ENCODE measurements at regions of chr6 and their contacts with region 1.

Region 1: DNA sequence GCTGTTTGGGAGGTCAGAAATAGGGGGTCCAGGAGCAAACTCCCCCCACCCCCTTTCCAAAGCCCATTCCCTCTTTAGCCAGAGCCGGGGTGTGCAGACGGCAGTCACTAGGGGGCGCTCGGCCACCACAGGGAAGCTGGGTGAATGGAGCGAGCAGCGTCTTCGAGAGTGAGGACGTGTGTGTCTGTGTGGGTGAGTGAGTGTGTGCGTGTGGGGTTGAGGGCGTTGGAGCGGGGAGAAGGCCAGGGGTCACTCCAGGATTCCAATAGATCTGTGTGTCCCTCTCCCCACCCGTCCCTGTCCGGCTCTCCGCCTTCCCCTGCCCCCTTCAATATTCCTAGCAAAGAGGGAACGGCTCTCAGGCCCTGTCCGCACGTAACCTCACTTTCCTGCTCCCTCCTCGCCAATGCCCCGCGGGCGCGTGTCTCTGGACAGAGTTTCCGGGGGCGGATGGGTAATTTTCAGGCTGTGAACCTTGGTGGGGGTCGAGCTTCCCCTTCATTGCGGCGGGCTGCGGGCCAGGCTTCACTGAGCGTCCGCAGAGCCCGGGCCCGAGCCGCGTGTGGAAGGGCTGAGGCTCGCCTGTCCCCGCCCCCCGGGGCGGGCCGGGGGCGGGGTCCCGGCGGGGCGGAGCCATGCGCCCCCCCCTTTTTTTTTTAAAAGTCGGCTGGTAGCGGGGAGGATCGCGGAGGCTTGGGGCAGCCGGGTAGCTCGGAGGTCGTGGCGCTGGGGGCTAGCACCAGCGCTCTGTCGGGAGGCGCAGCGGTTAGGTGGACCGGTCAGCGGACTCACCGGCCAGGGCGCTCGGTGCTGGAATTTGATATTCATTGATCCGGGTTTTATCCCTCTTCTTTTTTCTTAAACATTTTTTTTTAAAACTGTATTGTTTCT is at the start of gene VEGFA:
- DNase-seq: peak; percentile 72 to 92 (median 90)
- ATAC-seq: peak; percentile 80
- H3K4me3 ChIP-seq: peak within 1 kb of the TSS; percentile 64 to 88
- H3K4me3 Mint-ChIP-seq: peak within 1 kb of the TSS; percentile 92
- H3K27ac ChIP-seq: peak within 1 kb of the TSS in 1 of 2 experiments; percentile 27
- H3K27ac Mint-ChIP-seq: peak within 1 kb of the TSS; percentile 23
- H3K4me1 ChIP-seq: peaks cover 6% of the 10 kb centered on the region
- H3K4me1 Mint-ChIP-seq: peaks cover 13% of the 10 kb centered on the region
- H3K27me3 ChIP-seq: peaks cover 0 to 20% of the 10 kb centered on the region in 2 experiments
- H3K27me3 Mint-ChIP-seq: peaks cover 28% of the 10 kb centered on the region
- CTCF ChIP-seq: peak; percentile 96
- total RNA-seq, gene VEGFA: 4.6 to 5.3 TPM

Region 2: DNA sequence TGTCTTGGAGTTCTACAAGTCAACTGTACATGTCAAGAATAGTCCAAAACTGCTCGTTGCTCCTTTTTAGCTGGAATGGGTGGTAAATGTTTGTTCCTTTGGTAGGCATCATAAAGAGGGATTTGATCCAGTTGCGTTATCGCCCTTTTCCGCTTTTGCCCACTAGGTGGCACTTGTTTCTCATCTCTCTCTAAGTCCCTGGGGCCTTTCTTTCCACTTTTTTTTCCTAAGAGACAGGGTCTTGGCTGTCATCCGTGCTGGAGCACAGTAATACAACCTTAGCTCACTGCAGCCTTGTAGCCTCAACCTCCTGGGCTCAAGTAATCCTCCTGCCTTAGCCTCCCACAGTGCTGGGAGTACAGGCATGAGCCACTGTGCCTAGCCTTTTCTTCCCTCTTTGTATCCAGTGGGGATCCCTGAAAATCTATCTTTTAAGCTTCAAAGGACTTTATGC is 161.4 kb before region 1 on chr6:
- CTCF ChIA-PET with region 1: interaction called, 3 read pairs
- POLR2A ChIA-PET with region 1: no interaction called
- intact Hi-C with region 1: loop called in 1 of 2 experiments (anchors 5 kb)
- DNase-seq: peak; percentile 23 to 75 (median 61)
- ATAC-seq: peak; percentile 38
- H3K4me3 ChIP-seq: no peak overlapping the region
- H3K4me3 Mint-ChIP-seq: no peak overlapping the region
- H3K27ac ChIP-seq: no peak overlapping the region
- H3K27ac Mint-ChIP-seq: no peak overlapping the region
- H3K4me1 ChIP-seq: no peaks in the 10 kb centered on the region
- H3K4me1 Mint-ChIP-seq: peaks cover 3% of the 10 kb centered on the region
- H3K27me3 ChIP-seq: no peaks in the 10 kb centered on the region
- H3K27me3 Mint-ChIP-seq: no peaks in the 10 kb centered on the region
- CTCF ChIP-seq: peak; percentile 63

Region 3: DNA sequence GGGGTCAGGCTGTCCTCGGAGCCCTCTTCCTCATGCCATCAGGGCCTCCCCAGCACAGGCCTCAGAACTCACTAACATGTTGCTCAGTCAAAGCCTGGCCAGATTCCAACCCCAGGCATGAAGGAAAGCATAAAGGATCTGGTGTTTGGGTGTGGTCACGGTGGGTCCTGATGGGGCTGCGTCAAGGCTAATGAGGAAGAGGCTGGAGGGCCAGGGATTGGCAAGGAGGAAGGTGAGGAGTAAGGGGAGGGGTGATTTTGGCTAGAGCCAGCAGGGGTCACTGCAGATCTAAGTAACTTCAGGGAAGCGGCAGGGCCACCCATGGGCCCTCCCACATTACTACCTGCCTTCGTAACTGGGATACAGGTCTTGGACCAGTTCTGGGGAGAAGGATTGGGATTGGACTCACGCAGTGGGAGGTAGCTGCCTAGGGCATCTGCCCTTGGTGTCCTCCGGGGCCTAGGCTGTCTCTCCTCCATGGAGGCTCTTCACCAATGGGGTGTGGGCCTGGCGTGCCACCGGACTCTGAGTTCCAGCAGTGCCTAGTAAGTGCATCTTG is 46.0 kb before region 1 on chr6:
- CTCF ChIA-PET with region 1: interaction called, 15 read pairs
- POLR2A ChIA-PET with region 1: no interaction called
- intact Hi-C with region 1: loop called (anchors 1 kb)
- DNase-seq: peak; percentile 40 to 83 (median 69)
- ATAC-seq: peak; percentile 65
- H3K4me3 ChIP-seq: no peak overlapping the region
- H3K4me3 Mint-ChIP-seq: no peak overlapping the region
- H3K27ac ChIP-seq: no peak overlapping the region
- H3K27ac Mint-ChIP-seq: no peak overlapping the region
- H3K4me1 ChIP-seq: peaks cover 25% of the 10 kb centered on the region
- H3K4me1 Mint-ChIP-seq: peaks cover 35% of the 10 kb centered on the region
- H3K27me3 ChIP-seq: no peaks in the 10 kb centered on the region
- H3K27me3 Mint-ChIP-seq: no peaks in the 10 kb centered on the region
- CTCF ChIP-seq: peak; percentile 70

Region 4: GRCh38 chr6:43742931-43743632 is 26.7 kb before region 1 on chr6:
- CTCF ChIA-PET with region 1: interaction called, 10 read pairs
- POLR2A ChIA-PET with region 1: no interaction called
- intact Hi-C with region 1: no loop called
- DNase-seq: no peak
- ATAC-seq: no peak
- H3K4me3 ChIP-seq: no peak overlapping the region
- H3K4me3 Mint-ChIP-seq: no peak overlapping the region
- H3K27ac ChIP-seq: no peak overlapping the region
- H3K27ac Mint-ChIP-seq: no peak overlapping the region
- H3K4me1 ChIP-seq: no peaks in the 10 kb centered on the region
- H3K4me1 Mint-ChIP-seq: no peaks in the 10 kb centered on the region
- H3K27me3 ChIP-seq: no peaks in the 10 kb centered on the region
- H3K27me3 Mint-ChIP-seq: peaks cover 10% of the 10 kb centered on the region
- CTCF ChIP-seq: no peak

Region 5: GRCh38 chr6:43817192-43817591 is 47.4 kb after region 1 on chr6:
- CTCF ChIA-PET with region 1: interaction called, 10 read pairs
- POLR2A ChIA-PET with region 1: no interaction called
- intact Hi-C with region 1: loop called in 1 of 2 experiments (anchors 2 kb)
- DNase-seq: peak in 3 of 9 experiments; percentile 8 to 41 (median 26)
- ATAC-seq: peak; percentile 40
- H3K4me3 ChIP-seq: no peak overlapping the region
- H3K4me3 Mint-ChIP-seq: no peak overlapping the region
- H3K27ac ChIP-seq: no peak overlapping the region
- H3K27ac Mint-ChIP-seq: no peak overlapping the region
- H3K4me1 ChIP-seq: peaks cover 13% of the 10 kb centered on the region
- H3K4me1 Mint-ChIP-seq: peaks cover 6% of the 10 kb centered on the region
- H3K27me3 ChIP-seq: no peaks in the 10 kb centered on the region
- H3K27me3 Mint-ChIP-seq: peaks cover 11% of the 10 kb centered on the region
- CTCF ChIP-seq: no peak

Region 6: DNA sequence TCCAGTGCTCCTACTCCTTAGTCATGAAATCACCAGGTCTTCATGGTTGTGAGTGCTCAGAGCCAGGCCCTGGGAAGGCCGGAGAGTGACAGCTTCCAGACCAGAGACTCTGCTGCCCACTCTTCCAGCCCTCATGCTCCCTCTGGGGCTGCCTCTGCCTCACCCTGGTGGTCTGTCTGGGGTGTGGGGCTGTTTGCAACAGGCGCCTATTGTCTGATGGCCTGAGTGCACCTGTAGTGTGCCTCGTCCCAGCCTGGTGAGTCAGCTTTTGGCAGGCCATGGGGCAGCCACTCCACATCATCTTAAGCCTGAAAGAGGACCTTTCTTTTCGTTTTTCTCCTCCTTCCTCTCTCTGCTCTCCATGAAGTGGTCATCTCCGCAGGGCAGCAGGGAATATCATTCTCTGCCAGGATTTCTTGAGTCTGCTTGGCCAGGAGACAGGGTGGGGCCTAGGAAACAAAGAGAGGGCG is 174.0 kb after region 1 on chr6:
- CTCF ChIA-PET with region 1: no interaction called
- POLR2A ChIA-PET with region 1: no interaction called
- intact Hi-C with region 1: no loop called
- DNase-seq: no peak
- ATAC-seq: no peak
- H3K4me3 ChIP-seq: no peak overlapping the region
- H3K4me3 Mint-ChIP-seq: no peak overlapping the region
- H3K27ac ChIP-seq: no peak overlapping the region
- H3K27ac Mint-ChIP-seq: no peak overlapping the region
- H3K4me1 ChIP-seq: no peaks in the 10 kb centered on the region
- H3K4me1 Mint-ChIP-seq: no peaks in the 10 kb centered on the region
- H3K27me3 ChIP-seq: no peaks in the 10 kb centered on the region
- H3K27me3 Mint-ChIP-seq: no peaks in the 10 kb centered on the region
- CTCF ChIP-seq: no peak

Region 7: GRCh38 chr6:44074439-44075136 is 304.8 kb after region 1 on chr6:
- CTCF ChIA-PET with region 1: interaction called, 153 read pairs
- POLR2A ChIA-PET with region 1: interaction called, 3 read pairs
- intact Hi-C with region 1: loop called (anchors 1 kb)
- DNase-seq: peak; percentile 27 to 84 (median 67)
- ATAC-seq: peak; percentile 50
- H3K4me3 ChIP-seq: peak overlapping the region in 1 of 2 experiments; percentile 44
- H3K4me3 Mint-ChIP-seq: peak overlapping the region; percentile 98
- H3K27ac ChIP-seq: no peak overlapping the region
- H3K27ac Mint-ChIP-seq: no peak overlapping the region
- H3K4me1 ChIP-seq: peaks cover 19% of the 10 kb centered on the region
- H3K4me1 Mint-ChIP-seq: peaks cover 19% of the 10 kb centered on the region
- H3K27me3 ChIP-seq: peaks cover 0 to 3% of the 10 kb centered on the region in 2 experiments
- H3K27me3 Mint-ChIP-seq: peaks cover 25% of the 10 kb centered on the region
- CTCF ChIP-seq: peak; percentile 80

Region 8: DNA sequence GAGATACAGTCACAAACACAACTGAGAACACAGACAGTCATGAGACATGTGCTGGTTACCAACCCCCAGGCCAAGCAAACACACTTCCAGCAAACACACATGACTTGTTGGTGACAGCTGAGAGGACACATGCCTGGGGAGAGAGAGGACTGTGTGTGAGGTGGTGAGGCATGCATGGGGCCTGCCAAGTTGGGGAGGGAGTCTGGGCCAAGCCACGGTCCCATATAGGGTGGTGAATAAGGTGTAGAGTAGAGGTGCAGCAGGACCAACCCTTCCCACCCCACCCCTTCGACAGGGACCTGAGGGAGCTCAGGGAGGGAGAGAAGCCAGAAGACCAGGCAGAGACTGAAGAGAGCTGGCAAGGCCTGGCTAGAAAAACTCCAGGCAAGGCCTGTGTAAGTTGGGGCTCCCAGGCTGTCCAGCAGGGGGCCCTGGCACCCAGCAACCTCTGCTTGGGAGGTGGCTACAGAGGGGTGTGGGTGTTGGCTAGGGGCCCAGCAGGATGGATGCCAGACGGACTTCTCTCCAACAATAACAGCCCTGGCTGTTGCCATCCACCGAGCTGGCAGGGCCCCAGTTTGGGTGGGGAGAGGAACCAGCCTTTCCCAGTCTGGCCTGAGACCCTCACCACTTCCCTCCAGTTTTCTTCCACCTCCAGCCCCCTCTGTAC is 451.7 kb after region 1 on chr6:
- CTCF ChIA-PET with region 1: no interaction called
- POLR2A ChIA-PET with region 1: no interaction called
- intact Hi-C with region 1: loop called in 1 of 2 experiments (anchors 2 kb)
- DNase-seq: peak; percentile 53 to 85 (median 72)
- ATAC-seq: peak; percentile 60
- H3K4me3 ChIP-seq: no peak overlapping the region
- H3K4me3 Mint-ChIP-seq: no peak overlapping the region
- H3K27ac ChIP-seq: no peak overlapping the region
- H3K27ac Mint-ChIP-seq: no peak overlapping the region
- H3K4me1 ChIP-seq: peaks cover 28% of the 10 kb centered on the region
- H3K4me1 Mint-ChIP-seq: peaks cover 41% of the 10 kb centered on the region
- H3K27me3 ChIP-seq: peaks cover 0 to 8% of the 10 kb centered on the region in 2 experiments
- H3K27me3 Mint-ChIP-seq: peaks cover 3% of the 10 kb centered on the region
- CTCF ChIP-seq: peak; percentile 47

Region 9: GRCh38 chr6:45677381-45678284 is 1907.9 kb after region 1 on chr6:
- CTCF ChIA-PET with region 1: no interaction called
- POLR2A ChIA-PET with region 1: no interaction called
- intact Hi-C with region 1: no loop called
- DNase-seq: peak; percentile 18 to 71 (median 47)
- ATAC-seq: peak; percentile 80
- H3K4me3 ChIP-seq: peak overlapping the region; percentile 6 to 23
- H3K4me3 Mint-ChIP-seq: peak overlapping the region; percentile 77
- H3K27ac ChIP-seq: peak overlapping the region in 1 of 2 experiments; percentile 38
- H3K27ac Mint-ChIP-seq: peak overlapping the region; percentile 85
- H3K4me1 ChIP-seq: peaks cover 30% of the 10 kb centered on the region
- H3K4me1 Mint-ChIP-seq: peaks cover 36% of the 10 kb centered on the region
- H3K27me3 ChIP-seq: no peaks in the 10 kb centered on the region
- H3K27me3 Mint-ChIP-seq: no peaks in the 10 kb centered on the region
- CTCF ChIP-seq: no peak